Right cardiac atrium (tissue), 5 donors: ENCODE measurements at regions of chr14 and their contacts with region 1.

Region 1: GRCh38 chr14:49849213-49849847 is 3.3 kb downstream of the NEMF start:
- DNase-seq: no peak
- ATAC-seq: no peak
- H3K4me3 ChIP-seq: no peak overlapping the region
- H3K27ac ChIP-seq: no peak overlapping the region
- H3K4me1 ChIP-seq: no peaks in the 10 kb centered on the region
- H3K27me3 ChIP-seq: no peaks in the 10 kb centered on the region

Region 2: DNA sequence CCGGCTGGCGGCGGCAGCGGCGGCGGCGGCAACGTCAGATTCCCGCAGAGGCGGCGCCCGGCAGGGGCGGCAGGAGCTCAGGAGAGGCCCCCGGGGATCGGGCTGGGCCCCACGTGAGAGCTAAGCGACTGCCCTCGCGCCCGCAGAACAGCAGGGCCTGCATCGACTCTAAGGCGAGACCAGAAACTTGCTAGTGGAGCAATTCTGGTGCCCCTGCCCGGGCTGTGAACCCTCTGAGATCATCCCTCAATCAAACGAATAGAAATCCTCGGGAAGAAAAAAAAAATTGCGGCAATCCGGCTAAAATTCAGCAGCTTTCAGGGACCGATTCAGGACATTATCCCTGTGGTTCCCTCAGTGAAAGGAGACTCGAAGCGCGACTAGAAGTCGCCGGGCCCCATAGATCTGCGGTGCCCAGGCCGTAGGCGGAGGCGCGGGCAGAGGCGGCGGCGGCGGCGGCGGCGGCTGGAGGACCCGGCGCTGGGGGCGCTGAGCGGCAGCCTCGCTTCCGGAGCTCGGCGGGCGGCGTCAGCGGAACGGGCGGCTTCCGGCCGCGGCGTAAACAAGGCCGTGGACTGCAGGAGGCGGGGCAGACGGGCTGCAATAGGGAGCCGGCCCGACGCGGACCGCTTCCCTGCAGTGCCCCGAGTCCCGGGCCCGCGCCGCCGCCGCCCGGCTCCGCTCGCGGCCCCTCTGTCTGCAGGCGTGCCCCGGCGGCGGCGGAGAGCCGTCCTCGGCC is 81.6 kb before region 1 on chr14 and contains the start of gene KLHDC2:
- intact Hi-C with region 1: no loop called
- DNase-seq: peak; percentile 91 to 97 (median 96)
- ATAC-seq: peak; percentile 93 to 97
- H3K4me3 ChIP-seq: peak within 1 kb of the TSS; percentile 90
- H3K27ac ChIP-seq: peak within 1 kb of the TSS; percentile 94
- H3K4me1 ChIP-seq: peaks cover 4% of the 10 kb centered on the region
- H3K27me3 ChIP-seq: no peaks in the 10 kb centered on the region
- total RNA-seq, gene KLHDC2: 71.5 to 91.9 (median 74.1) TPM

Region 3: DNA sequence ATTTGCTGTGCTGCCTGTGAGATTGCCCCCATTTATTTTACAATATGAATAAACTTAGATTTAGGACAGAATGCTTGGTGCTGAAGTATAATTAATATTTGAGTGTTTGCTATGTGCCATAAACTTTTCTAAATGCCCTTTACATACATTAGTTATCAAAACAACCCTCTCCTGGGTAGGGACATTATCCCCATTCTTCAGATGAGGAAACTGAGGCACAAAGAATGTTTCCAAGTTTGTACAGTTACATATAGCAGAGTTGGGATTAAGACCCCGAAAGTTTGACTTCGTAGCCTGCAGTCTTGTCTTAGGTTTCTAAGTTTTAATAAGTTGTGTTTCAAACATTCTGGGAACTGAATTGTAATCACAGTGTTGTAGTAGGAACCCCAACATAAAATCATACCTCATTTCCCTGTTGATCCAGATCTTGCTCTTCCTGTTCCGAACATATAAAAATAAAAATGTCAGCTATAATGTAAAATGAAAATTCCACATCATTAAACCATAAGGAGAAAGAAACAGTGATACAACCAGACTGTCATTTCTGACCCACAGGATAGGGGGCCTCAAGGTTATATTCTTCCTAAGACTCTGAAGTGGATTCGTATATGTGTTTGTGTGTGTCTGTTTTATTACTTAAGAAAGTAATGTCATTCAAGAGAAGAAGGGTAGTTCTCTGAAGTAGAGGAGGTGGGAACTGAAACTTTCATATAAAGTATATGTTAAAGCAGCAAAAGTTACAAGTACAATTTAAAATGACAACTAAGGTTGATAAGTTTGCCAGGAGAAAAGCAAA is 62.8 kb before region 1 on chr14:
- intact Hi-C with region 1: loop called in 1 of 4 experiments (anchors 10 kb)
- DNase-seq: no peak
- ATAC-seq: no peak
- H3K4me3 ChIP-seq: no peak overlapping the region
- H3K27ac ChIP-seq: no peak overlapping the region
- H3K4me1 ChIP-seq: no peaks in the 10 kb centered on the region
- H3K27me3 ChIP-seq: no peaks in the 10 kb centered on the region